Posterior cingulate gyrus (tissue), 11 donors: ENCODE measurements at regions of chr9 and their contacts with region 1.

Region 1: DNA sequence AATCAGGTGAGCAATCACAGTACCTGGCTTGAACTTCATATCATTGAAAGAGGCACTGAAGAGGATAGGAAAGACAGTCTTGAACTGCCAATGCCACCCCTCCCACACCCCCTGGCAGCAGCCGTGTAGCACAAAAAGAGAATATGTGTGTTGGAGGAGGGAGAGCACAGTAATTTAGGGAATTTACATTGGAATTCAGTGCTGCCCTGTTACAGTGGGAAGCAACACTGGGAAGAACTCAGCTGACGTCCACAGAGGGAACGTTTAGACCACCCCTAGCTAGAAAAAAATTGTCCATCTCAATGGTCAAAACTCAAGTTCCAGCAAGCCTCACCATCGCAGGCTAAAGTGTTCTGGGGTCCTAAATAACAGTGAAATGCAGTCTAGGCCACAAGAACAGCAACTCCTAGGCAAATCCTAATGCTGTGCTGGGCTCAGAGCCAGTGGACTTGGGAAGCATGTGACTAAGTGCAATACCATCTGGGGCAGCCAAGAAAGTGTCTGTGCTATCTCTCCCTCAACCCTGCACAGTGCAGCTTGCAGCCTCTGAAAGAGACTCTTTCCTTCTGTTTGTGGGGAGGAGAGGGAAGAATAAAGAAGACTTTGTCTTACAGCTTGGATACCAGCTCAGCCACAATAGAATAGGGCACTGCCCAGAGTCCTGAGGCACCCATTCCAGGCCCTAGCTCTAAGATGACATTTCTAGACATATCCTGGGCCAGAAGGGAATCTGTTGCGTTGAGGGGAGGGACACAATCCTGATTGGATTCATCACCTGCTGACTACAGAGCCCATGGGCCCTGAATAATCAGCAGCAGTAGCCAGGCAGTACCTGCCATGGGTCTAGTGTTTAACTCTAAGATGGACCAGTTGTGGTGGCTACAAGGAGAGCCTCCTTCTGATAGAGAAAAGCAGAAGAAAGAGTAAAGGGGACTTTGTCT is 62.1 kb upstream of the VLDLR start:
- DNase-seq: peak; percentile 14 to 87 (median 45)

Region 2: GRCh38 chr9:2620919-2621679 is 61.6 kb after region 1 on chr9:
- intact Hi-C with region 1: loop called (anchors 2 kb)
- DNase-seq: peak; percentile 52 to 97 (median 78)

Region 3: GRCh38 chr9:2662496-2662895 is 103.0 kb after region 1 on chr9:
- intact Hi-C with region 1: no loop called
- DNase-seq: peak in 8 of 10 donors; percentile 36 to 90 (median 68)